ENCODE measurements at regions of chr16 and their contacts with region 1.

Region 1: GRCh38 chr16:31142109-31143010 is 6.8 kb upstream of the PRSS8 start:
- DNase-seq: peak; percentile 99
- H3K4me3 Mint-ChIP-seq: peak overlapping the region; percentile 63
- H3K27ac Mint-ChIP-seq: peak overlapping the region; percentile 87
- H3K4me1 Mint-ChIP-seq: peaks cover 24% of the 10 kb centered on the region
- H3K27me3 Mint-ChIP-seq: peaks cover 38% of the 10 kb centered on the region

Region 2: DNA sequence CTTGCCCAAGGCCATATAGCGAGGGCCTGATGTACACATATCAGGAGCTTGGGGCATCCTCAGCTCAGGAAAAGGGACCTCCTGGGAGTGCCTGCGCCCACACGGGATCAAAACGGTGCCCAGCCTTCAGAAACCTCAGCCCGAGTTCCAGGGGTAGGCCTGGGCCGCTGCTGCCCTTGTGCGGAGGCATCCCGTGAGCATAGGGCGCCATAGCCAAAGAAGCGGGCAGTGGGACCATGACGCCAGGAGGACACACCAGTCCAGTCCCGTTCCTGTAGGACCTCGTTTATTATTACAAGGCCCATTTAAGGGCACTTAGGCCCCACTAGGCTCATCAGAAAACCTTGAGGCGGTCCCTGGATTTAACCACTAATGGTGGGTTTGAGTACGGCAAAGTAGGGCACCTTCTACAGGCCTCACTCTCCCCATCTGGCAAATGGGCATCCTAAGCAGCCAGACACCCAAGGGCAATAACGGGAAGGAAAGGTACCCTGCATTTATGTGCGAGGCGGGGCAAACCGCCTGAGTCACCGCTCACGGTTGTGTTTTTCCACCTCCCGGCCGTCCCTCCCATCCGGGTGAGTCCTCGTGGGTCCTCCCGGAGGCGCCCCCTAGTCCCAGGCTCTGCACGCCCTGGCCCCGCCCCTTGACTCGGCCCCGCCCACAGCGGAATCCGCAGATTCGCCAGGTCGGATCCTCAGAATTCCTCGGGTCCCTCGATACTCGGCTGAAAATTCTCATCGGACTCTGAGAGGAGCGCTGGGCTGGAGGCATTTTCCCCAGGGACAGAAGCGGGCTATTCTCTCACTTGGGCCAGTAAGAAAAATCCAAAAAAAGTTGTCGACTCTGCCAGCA is 185.5 kb before region 1 on chr16:
- CTCF ChIA-PET with region 1: interaction called, 10 read pairs
- DNase-seq: peak; percentile 90
- H3K4me3 Mint-ChIP-seq: peak overlapping the region; percentile 85
- H3K27ac Mint-ChIP-seq: peak overlapping the region; percentile 98
- H3K4me1 Mint-ChIP-seq: peaks cover 44% of the 10 kb centered on the region
- H3K27me3 Mint-ChIP-seq: no peaks in the 10 kb centered on the region

Region 3: GRCh38 chr16:30984669-30985400 is 157.5 kb before region 1 on chr16 and contains the start of gene HSD3B7:
- CTCF ChIA-PET with region 1: interaction called, 18 read pairs
- DNase-seq: peak; percentile 88
- H3K4me3 Mint-ChIP-seq: peak within 1 kb of the TSS; percentile 38
- H3K27ac Mint-ChIP-seq: peak within 1 kb of the TSS; percentile 45
- H3K4me1 Mint-ChIP-seq: peaks cover 11% of the 10 kb centered on the region
- H3K27me3 Mint-ChIP-seq: no peaks in the 10 kb centered on the region

Region 4: GRCh38 chr16:31073968-31074813 is 68.2 kb before region 1 on chr16 and contains the starts of genes ZNF646 and ZNF668:
- CTCF ChIA-PET with region 1: interaction called, 10 read pairs
- DNase-seq: peak; percentile 99
- H3K4me3 Mint-ChIP-seq: peak within 1 kb of the TSS; percentile 90
- H3K27ac Mint-ChIP-seq: peak within 1 kb of the TSS; percentile 95
- H3K4me1 Mint-ChIP-seq: peaks cover 40% of the 10 kb centered on the region
- H3K27me3 Mint-ChIP-seq: no peaks in the 10 kb centered on the region

Region 5: DNA sequence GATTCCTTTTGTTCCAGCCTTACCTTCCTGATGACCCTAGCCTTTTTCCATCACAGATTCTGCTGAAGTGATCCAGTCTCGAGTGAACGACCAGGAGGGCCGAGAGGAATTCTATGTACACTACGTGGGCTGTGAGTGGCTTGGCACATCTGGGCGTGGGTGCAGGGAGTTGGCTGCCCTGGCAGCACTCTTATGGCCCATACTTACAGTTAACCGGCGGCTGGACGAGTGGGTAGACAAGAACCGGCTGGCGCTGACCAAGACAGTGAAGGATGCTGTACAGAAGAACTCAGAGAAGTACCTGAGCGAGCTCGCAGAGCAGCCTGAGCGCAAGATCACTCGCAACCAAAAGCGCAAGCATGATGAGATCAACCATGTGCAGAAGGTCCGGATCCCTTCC is 22.2 kb before region 1 on chr16:
- CTCF ChIA-PET with region 1: interaction called, 19 read pairs
- DNase-seq: no peak
- H3K4me3 Mint-ChIP-seq: no peak overlapping the region
- H3K27ac Mint-ChIP-seq: no peak overlapping the region
- H3K4me1 Mint-ChIP-seq: peaks cover 19% of the 10 kb centered on the region
- H3K27me3 Mint-ChIP-seq: no peaks in the 10 kb centered on the region

Region 6: DNA sequence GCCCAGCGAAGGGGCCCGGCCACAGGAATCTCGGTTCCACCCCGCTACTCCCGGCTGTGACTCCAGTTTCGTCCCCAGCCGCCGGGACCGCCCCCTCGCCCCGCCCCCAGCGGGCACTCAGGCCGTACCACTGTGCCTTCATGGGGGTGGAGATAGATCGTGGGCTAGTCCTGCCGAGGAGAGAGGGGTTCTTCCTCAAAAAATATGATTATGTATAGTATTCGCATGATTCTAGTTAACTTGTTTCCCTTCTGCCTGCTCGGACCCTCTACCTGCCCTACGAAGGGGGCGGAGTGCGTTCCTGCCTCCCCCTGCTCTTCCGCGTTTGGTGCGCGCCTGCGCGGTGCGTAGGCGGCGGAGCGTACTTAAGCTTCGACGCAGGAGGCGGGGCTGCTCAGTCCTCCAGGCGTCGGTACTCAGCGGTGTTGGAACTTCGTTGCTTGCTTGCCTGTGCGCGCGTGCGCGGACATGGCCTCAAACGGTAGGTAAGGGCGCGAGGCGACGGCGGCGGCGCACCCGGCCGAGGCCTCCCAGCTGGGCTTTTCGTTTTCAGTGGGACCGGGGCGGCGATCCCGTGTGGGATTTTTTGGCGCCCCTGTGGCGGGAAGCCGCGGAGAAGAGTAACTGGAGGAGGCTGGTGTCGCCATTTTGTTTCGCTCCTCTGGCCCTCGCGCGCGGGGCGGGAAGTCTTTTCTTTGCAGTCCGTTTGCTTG is 37.5 kb after region 1 on chr16 and contains the start of gene FUS:
- CTCF ChIA-PET with region 1: interaction called, 23 read pairs
- DNase-seq: peak; percentile 91
- H3K4me3 Mint-ChIP-seq: peak within 1 kb of the TSS; percentile 95
- H3K27ac Mint-ChIP-seq: peak within 1 kb of the TSS; percentile 100
- H3K4me1 Mint-ChIP-seq: peaks cover 59% of the 10 kb centered on the region
- H3K27me3 Mint-ChIP-seq: peaks cover 4% of the 10 kb centered on the region